ENCODE measurements at regions of chr7 and their contacts with region 1.

Region 1: DNA sequence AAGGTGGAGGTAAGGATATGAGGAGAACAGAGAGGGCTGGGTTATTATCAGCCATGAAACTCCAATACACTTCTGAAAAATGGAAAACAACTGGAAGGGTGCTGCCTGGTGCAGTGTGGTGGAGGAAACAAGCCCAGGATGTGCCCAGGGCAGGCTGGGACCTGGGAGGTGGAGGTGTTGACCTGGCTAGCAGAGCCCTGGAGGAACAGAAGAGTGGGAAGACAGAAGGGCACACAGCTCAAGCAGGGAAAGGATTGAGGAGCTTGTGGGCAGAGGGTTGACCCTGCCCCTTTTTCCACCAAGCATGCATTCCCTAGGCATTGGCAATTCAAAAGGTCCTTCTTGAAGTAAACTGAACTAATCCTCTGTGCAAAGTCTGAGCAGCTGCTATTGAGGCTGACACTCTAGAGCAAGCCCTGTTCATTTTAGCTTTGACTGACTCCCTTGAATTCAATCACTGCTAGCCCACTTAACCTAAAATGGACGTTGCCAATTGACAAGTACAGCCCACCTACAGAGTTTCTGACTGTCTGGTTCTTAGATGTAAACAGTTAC is 116.4 kb upstream of the TNS3 start:
- DNase-seq: no peak
- ATAC-seq: no peak
- H3K4me3 ChIP-seq: no peak overlapping the region
- H3K4me3 Mint-ChIP-seq: no peak overlapping the region
- H3K27ac ChIP-seq: no peak overlapping the region
- H3K27ac Mint-ChIP-seq: no peak overlapping the region
- H3K4me1 ChIP-seq: no peaks in the 10 kb centered on the region
- H3K4me1 Mint-ChIP-seq: no peaks in the 10 kb centered on the region
- H3K27me3 ChIP-seq: no peaks in the 10 kb centered on the region
- H3K27me3 Mint-ChIP-seq: no peaks in the 10 kb centered on the region
- CTCF ChIP-seq: no peak

Region 2: GRCh38 chr7:47647181-47647917 is 51.0 kb before region 1 on chr7:
- CTCF ChIA-PET with region 1: no interaction called
- POLR2A ChIA-PET with region 1: no interaction called
- intact Hi-C with region 1: no loop called
- DNase-seq: peak; percentile 59
- ATAC-seq: peak; percentile 93
- H3K4me3 ChIP-seq: peak overlapping the region in 2 of 5 experiments; percentile 4 to 47
- H3K4me3 Mint-ChIP-seq: peak overlapping the region; percentile 76
- H3K27ac ChIP-seq: peak overlapping the region; percentile 3 to 16
- H3K27ac Mint-ChIP-seq: peak overlapping the region; percentile 89
- H3K4me1 ChIP-seq: peaks cover 22 to 34% of the 10 kb centered on the region in 2 donors
- H3K4me1 Mint-ChIP-seq: peaks cover 39% of the 10 kb centered on the region
- H3K27me3 ChIP-seq: no peaks in the 10 kb centered on the region
- H3K27me3 Mint-ChIP-seq: no peaks in the 10 kb centered on the region
- CTCF ChIP-seq: no peak

Region 3: GRCh38 chr7:47738563-47739166 is 40.4 kb after region 1 on chr7:
- CTCF ChIA-PET with region 1: no interaction called
- POLR2A ChIA-PET with region 1: no interaction called
- intact Hi-C with region 1: loop called (anchors 1 kb)
- DNase-seq: peak; percentile 30
- ATAC-seq: peak; percentile 76
- H3K4me3 ChIP-seq: no peak overlapping the region
- H3K4me3 Mint-ChIP-seq: peak overlapping the region; percentile 27
- H3K27ac ChIP-seq: no peak overlapping the region
- H3K27ac Mint-ChIP-seq: peak overlapping the region; percentile 43
- H3K4me1 ChIP-seq: peaks cover 13 to 17% of the 10 kb centered on the region in 2 donors
- H3K4me1 Mint-ChIP-seq: peaks cover 29% of the 10 kb centered on the region
- H3K27me3 ChIP-seq: peaks cover 0 to 3% (median 0%) of the 10 kb centered on the region in 4 experiments
- H3K27me3 Mint-ChIP-seq: no peaks in the 10 kb centered on the region
- CTCF ChIP-seq: no peak